Natural killer cell (primary cell): ENCODE measurements at regions of chr7 and their contacts with region 1.

Region 1: GRCh38 chr7:142782922-142783900 is 12.4 kb downstream of the PRSS2 start:
- DNase-seq: peak; percentile 88 to 91
- ATAC-seq: peak; percentile 54 to 81 (median 66)
- H3K4me3 ChIP-seq: peak overlapping the region; percentile 45
- H3K4me3 Mint-ChIP-seq: peak overlapping the region; percentile 90
- H3K27ac ChIP-seq: peak overlapping the region; percentile 62
- H3K27ac Mint-ChIP-seq: peak overlapping the region; percentile 92 to 100
- H3K4me1 ChIP-seq: peaks cover 46% of the 10 kb centered on the region
- H3K4me1 Mint-ChIP-seq: peaks cover 64 to 81% of the 10 kb centered on the region in 2 donors
- H3K27me3 ChIP-seq: no peaks in the 10 kb centered on the region
- H3K27me3 Mint-ChIP-seq: no peaks in the 10 kb centered on the region
- CTCF ChIP-seq: peak; percentile 93

Region 2: GRCh38 chr7:142632291-142633134 is 150.7 kb before region 1 on chr7:
- intact Hi-C with region 1: loop called (anchors 1 kb)
- DNase-seq: peak; percentile 56 to 84
- ATAC-seq: peak; percentile 88 to 99 (median 95)
- H3K4me3 ChIP-seq: no peak overlapping the region
- H3K4me3 Mint-ChIP-seq: no peak overlapping the region
- H3K27ac ChIP-seq: no peak overlapping the region
- H3K27ac Mint-ChIP-seq: peak overlapping the region in 1 of 2 donors; percentile 15
- H3K4me1 ChIP-seq: peaks cover 3% of the 10 kb centered on the region
- H3K4me1 Mint-ChIP-seq: peaks cover 16 to 20% of the 10 kb centered on the region in 2 donors
- H3K27me3 ChIP-seq: no peaks in the 10 kb centered on the region
- H3K27me3 Mint-ChIP-seq: peaks cover 7 to 9% of the 10 kb centered on the region in 2 donors
- CTCF ChIP-seq: peak; percentile 82

Region 3: DNA sequence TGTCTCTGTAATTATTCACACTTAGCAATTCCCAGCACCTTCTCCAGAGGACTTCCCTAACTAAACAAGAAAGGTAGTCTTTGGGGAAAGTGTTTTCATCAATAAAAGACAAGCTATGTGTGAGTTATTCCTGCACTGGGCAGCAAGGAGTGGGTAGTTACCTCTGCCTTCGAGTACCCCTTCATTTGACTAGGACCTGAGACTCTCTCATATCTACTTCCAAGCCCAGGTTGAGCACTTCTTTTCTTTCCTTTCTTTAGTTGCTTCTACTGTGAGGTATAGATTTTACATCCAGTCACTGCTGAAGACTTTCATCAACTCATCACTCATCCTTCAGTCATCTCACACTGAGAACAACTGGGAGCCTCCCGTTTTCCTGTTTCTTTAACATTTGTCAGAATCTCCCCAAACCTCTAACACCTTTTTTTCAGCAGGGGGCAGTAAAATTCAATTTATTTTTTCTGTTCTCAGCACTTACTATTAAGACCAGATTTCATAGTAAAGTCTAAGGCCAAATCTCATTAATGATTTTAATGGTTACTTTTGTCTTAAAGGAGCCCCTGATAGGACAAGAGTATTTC is 114.0 kb before region 1 on chr7:
- intact Hi-C with region 1: loop called (anchors 1 kb)
- DNase-seq: peak in 1 of 2 donors; percentile 58
- ATAC-seq: peak in 2 of 3 donors; percentile 71 to 72
- H3K4me3 ChIP-seq: no peak overlapping the region
- H3K4me3 Mint-ChIP-seq: no peak overlapping the region
- H3K27ac ChIP-seq: no peak overlapping the region
- H3K27ac Mint-ChIP-seq: peak overlapping the region; percentile 12 to 57
- H3K4me1 ChIP-seq: peaks cover 9% of the 10 kb centered on the region
- H3K4me1 Mint-ChIP-seq: peaks cover 22 to 27% of the 10 kb centered on the region in 2 donors
- H3K27me3 ChIP-seq: no peaks in the 10 kb centered on the region
- H3K27me3 Mint-ChIP-seq: no peaks in the 10 kb centered on the region
- CTCF ChIP-seq: peak; percentile 77

Region 4: GRCh38 chr7:142711746-142712619 is 71.2 kb before region 1 on chr7:
- intact Hi-C with region 1: loop called (anchors 1 kb)
- DNase-seq: peak; percentile 33 to 66
- ATAC-seq: peak; percentile 79 to 88 (median 80)
- H3K4me3 ChIP-seq: peak overlapping the region; percentile 22
- H3K4me3 Mint-ChIP-seq: peak overlapping the region; percentile 91
- H3K27ac ChIP-seq: peak overlapping the region; percentile 76
- H3K27ac Mint-ChIP-seq: peak overlapping the region; percentile 91 to 92
- H3K4me1 ChIP-seq: peaks cover 50% of the 10 kb centered on the region
- H3K4me1 Mint-ChIP-seq: peaks cover 73 to 87% of the 10 kb centered on the region in 2 donors
- H3K27me3 ChIP-seq: no peaks in the 10 kb centered on the region
- H3K27me3 Mint-ChIP-seq: no peaks in the 10 kb centered on the region
- CTCF ChIP-seq: peak; percentile 73

Region 5: GRCh38 chr7:142771353-142771723 is 11.9 kb before region 1 on chr7:
- intact Hi-C with region 1: no loop called
- DNase-seq: no peak
- ATAC-seq: no peak
- H3K4me3 ChIP-seq: no peak overlapping the region
- H3K4me3 Mint-ChIP-seq: no peak overlapping the region
- H3K27ac ChIP-seq: no peak overlapping the region
- H3K27ac Mint-ChIP-seq: peak overlapping the region in 1 of 2 donors; percentile 7
- H3K4me1 ChIP-seq: peaks cover 5% of the 10 kb centered on the region
- H3K4me1 Mint-ChIP-seq: peaks cover 59 to 65% of the 10 kb centered on the region in 2 donors
- H3K27me3 ChIP-seq: no peaks in the 10 kb centered on the region
- H3K27me3 Mint-ChIP-seq: no peaks in the 10 kb centered on the region
- CTCF ChIP-seq: no peak

Region 6: DNA sequence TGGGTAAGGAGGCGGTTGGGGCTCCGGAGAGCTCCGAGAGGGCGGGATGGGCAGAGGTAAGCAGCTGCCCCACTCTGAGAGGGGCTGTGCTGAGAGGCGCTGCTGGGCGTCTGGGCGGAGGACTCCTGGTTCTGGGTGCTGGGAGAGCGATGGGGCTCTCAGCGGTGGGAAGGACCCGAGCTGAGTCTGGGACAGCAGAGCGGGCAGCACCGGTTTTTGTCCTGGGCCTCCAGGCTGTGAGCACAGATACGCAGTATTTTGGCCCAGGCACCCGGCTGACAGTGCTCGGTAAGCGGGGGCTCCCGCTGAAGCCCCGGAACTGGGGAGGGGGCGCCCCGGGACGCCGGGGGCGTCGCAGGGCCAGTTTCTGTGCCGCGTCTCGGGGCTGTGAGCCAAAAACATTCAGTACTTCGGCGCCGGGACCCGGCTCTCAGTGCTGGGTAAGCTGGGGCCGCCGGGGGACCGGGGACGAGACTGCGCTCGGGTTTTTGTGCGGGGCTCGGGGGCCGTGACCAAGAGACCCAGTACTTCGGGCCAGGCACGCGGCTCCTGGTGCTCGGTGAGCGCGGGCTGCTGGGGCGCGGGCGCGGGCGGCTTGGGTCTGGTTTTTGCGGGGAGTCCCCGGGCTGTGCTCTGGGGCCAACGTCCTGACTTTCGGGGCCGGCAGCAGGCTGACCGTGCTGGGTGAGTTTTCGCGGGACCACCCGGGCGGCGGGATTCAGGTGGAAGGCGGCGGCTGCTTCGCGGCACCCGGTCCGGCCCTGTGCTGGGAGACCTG is 13.6 kb after region 1 on chr7:
- intact Hi-C with region 1: loop called (anchors 1 kb)
- DNase-seq: peak in 1 of 2 donors; percentile 32
- ATAC-seq: peak; percentile 19 to 38 (median 36)
- H3K4me3 ChIP-seq: peak overlapping the region; percentile 93
- H3K4me3 Mint-ChIP-seq: peak overlapping the region; percentile 99
- H3K27ac ChIP-seq: peak overlapping the region; percentile 98
- H3K27ac Mint-ChIP-seq: peak overlapping the region; percentile 92 to 100
- H3K4me1 ChIP-seq: peaks cover 64% of the 10 kb centered on the region
- H3K4me1 Mint-ChIP-seq: peaks cover 76 to 92% of the 10 kb centered on the region in 2 donors
- H3K27me3 ChIP-seq: no peaks in the 10 kb centered on the region
- H3K27me3 Mint-ChIP-seq: no peaks in the 10 kb centered on the region
- CTCF ChIP-seq: no peak